ENCODE measurements at regions of chr19 and their contacts with region 1.

Region 1: DNA sequence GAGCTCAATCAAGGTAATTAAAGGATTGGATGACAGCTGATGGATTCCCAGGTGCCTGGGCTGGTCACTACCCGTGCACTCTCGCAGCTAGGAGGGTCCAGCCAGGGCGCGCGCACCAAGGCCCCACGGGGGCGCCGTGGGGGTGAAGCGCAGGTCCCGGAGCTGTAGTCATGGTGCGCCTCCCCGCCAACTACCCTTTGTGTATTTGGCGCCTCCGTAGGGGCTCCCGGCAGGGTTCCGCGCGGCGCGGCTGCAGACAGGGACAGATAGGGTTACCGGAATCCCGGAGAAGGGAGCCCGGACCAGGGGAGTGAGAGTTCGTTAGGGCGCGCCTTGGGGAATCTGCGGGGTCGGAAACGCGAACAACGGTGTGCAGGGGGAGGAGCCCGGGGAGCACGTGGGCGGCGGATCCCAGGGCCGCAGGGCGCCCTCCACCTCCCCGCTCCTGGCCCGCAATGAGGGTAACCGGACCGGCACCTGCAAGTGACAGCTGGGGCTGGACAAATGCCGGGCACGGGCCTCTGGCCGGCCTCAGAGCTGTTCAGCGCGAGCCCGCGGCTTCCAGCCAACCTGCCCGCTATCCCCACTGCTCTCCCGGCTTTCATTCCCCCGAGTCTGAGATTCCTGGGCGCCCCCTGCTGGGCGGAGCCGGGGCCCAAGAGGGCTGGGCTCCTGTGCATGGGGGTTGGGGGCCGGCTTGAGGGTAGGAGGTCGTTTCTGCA is 3.4 kb upstream of the PRAM1 start:
- DNase-seq: peak; percentile 71 to 86 (median 78)
- H3K4me3 ChIP-seq: peak overlapping the region; percentile 50 to 94 (median 71)
- H3K27ac ChIP-seq: peak overlapping the region in 58 of 59 donors; percentile 9 to 87 (median 73)
- H3K27me3 ChIP-seq: no peaks in the 10 kb centered on the region
- CTCF ChIP-seq: peak; percentile 72 to 97 (median 91)

Region 2: DNA sequence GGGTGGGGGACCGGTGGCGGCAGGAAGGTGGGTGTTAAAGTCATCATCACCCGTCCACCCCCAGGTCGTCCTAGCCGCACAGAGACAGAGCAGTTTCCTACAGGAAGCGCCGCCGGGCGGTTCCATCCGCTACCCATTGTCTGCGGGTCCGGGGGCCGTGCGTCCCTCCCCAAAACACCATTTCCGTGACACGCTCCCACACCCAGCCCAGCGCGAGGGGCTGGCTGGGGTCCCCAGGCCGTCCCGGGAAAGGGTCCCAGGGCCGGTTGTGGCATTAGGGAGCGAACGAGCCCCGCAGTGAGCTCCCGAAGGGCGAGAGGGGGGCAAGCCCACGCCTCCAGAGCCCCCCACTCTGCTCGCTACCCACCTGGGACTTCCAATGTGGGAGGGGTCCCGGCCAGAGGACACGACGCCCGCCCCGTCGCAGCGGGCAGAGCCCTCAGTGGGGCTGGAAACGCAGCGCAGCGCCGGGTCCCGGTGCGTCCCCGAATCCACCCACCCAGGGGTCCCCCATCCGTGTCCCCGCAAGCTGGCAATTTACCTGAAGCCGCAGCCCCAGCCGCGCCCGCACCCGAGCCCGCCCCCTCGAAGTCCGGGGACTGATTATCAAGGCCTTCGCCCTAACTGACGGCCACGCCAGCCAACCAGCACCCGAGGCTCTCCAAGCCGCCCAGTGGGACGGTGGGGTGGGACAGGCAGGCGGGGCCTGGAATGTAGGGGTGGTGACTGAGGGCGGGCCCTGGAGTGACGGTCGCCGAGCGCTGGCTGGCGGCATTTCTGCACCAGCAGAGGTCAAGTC is 163.0 kb before region 1 on chr19 and contains the start of gene KANK3:
- intact Hi-C with region 1: loop called in 1 of 2 experiments (anchors 2 kb)
- DNase-seq: peak; percentile 28 to 94 (median 90)
- H3K4me3 ChIP-seq: peak within 1 kb of the TSS; percentile 29 to 75 (median 61)
- H3K27ac ChIP-seq: peak within 1 kb of the TSS in 51 of 59 donors; percentile 7 to 91 (median 77)
- H3K27me3 ChIP-seq: peaks cover 0 to 31% (median 9%) of the 10 kb centered on the region in 45 donors
- CTCF ChIP-seq: peak in 16 of 56 donors; percentile 7 to 42 (median 21)
- total RNA-seq, gene KANK3: 4.7 to 29.3 (median 10.7) TPM

Region 3: DNA sequence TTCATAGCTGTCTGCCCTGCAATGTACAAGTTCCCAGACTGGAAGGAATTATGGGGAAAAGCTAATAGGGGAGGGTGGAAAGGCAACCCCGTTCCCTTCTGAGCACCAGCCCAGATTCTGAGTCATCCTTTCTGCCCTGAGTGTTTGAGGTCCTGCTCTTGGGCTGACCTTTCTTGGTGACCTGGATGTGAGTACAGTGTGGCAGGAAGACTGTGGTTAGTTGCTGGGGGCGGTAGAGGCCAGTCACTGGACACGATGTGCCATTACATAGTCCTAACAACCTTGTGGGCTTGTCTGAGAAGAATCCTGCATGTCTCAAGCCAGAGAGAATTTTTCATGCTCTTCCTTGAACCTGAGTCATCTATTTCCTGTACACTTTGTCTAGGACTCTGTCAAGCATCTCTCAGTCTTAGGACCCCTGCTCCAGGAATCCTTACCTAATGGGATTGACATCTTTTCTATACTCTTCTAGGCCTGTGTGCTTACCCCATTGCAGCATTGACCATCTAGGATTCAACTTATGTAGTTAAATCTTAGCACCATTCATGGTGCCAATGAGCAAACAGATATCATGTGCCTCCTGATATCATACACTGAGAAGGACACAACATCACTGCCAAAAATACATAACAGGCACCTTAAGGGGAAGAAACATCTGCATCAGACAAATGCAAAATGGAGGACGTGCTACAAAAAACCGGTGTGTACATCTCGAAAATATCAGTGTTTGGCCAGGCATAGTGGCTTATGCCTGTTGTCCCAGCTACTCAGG is 150.0 kb before region 1 on chr19:
- intact Hi-C with region 1: loop called (anchors 1 to 2 kb)
- DNase-seq: no peak
- H3K4me3 ChIP-seq: no peak overlapping the region
- H3K27ac ChIP-seq: peak overlapping the region in 1 of 59 donors; percentile 10
- H3K27me3 ChIP-seq: peaks cover 0 to 6% (median 0%) of the 10 kb centered on the region in 45 donors
- CTCF ChIP-seq: no peak

Region 4: DNA sequence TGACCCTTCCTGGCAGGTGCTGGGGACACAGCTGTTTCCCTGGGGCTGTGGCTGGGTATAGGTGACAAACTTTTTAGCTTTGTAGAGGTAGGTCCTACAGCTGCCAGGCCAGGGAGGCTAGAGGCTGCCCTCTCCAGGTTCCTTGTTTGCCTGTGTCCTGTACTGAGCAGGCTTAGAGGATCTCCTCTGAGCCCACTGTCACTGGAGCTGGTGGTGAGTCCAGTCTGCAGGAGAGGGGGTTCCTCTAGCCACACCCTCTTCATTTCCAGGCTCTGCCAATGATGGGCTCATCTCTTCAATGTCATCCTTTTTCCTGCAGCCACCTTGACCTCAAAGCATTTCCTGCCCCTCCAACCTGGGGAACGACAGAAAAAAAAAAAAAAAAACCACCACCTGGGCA is 128.2 kb before region 1 on chr19:
- intact Hi-C with region 1: no loop called
- DNase-seq: peak in 1 of 10 donors; percentile 12
- H3K4me3 ChIP-seq: no peak overlapping the region
- H3K27ac ChIP-seq: no peak overlapping the region
- H3K27me3 ChIP-seq: no peaks in the 10 kb centered on the region
- CTCF ChIP-seq: no peak

Region 5: GRCh38 chr19:8396563-8397203 is 109.2 kb before region 1 on chr19:
- intact Hi-C with region 1: loop called in 1 of 2 experiments (anchors 5 kb)
- DNase-seq: peak in 9 of 10 donors; percentile 34 to 82 (median 71)
- H3K4me3 ChIP-seq: peak overlapping the region in 1 of 59 donors; percentile 6
- H3K27ac ChIP-seq: peak overlapping the region in 58 of 59 donors; percentile 39 to 100 (median 99)
- H3K27me3 ChIP-seq: no peaks in the 10 kb centered on the region
- CTCF ChIP-seq: peak; percentile 33 to 87 (median 71)

Region 6: GRCh38 chr19:8412783-8413628 is 92.8 kb before region 1 on chr19 and contains the start of gene MARCHF2:
- intact Hi-C with region 1: loop called in 1 of 2 experiments (anchors 1 kb)
- DNase-seq: peak; percentile 91 to 99 (median 96)
- H3K4me3 ChIP-seq: peak within 1 kb of the TSS; percentile 61 to 100 (median 90)
- H3K27ac ChIP-seq: peak within 1 kb of the TSS in 37 of 59 donors; percentile 7 to 80 (median 62)
- H3K27me3 ChIP-seq: no peaks in the 10 kb centered on the region
- CTCF ChIP-seq: peak; percentile 35 to 86 (median 72)
- total RNA-seq, gene MARCHF2: 61.3 to 163 (median 86.8) TPM

Region 7: DNA sequence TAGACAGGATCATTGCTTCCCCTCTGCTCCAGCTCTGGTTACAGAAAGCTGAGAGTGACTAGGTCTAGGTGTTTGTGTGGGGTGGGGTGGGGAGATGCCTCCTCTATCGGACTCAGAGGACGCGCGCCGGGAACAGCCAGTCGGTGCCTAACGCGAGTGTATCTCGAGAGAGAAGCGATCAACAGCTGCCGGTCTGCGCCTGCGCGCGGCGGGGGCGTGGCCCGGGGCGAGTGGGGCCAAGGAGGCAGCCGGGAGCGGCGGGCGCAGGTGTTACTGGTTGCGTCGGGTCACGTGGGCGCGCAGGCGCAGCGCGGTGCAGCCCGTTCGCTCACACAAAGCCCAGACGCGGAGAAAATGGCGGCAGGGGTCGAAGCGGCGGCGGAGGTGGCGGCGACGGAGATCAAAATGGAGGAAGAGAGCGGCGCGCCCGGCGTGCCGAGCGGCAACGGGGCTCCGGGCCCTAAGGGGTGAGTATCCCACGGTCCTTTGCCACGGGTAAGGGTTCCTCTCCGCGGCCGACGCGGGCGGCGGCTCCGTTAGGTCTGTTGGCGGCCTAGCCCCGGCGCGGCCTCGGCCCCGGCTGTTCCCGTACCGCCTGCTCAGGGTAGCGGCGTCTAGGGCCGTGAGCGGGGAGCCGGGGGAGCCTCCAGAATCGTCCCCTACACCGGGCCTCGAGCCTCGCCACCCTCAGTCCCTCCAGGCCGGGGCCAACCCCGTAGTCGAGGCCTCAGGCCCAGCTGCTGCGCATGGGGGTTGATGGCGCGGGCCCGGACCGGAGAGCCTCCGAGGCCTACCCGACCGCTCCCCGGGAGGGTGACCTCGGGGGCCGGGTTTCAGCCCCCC is 61.0 kb before region 1 on chr19 and contains the start of gene HNRNPM:
- intact Hi-C with region 1: loop called (anchors 2 to 5 kb)
- DNase-seq: peak; percentile 99 to 100 (median 100)
- H3K4me3 ChIP-seq: peak within 1 kb of the TSS; percentile 47 to 100 (median 98)
- H3K27ac ChIP-seq: peak within 1 kb of the TSS; percentile 80 to 99 (median 95)
- H3K27me3 ChIP-seq: no peaks in the 10 kb centered on the region
- CTCF ChIP-seq: peak in 28 of 56 donors; percentile 6 to 55 (median 26)
- total RNA-seq, gene HNRNPM: 99.2 to 179 (median 128) TPM

Region 8: DNA sequence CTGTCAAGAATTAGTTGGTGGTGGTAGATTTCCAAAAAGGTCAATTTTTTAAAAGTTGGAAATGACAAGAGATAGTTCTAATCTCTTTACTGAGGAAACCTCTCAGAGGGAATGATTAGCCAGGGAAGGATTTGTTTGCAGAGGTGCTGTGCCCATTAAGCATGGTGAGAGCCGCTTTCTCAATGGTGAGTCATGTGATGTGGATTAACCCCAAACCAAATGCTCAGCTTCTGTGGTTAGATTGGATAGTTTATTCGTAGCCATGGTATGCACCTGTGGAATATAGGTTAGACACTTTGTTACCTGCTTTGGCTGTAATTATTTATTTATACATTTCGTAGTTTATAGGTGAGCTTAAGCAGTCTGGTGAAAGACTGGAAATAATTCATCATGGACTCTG is 54.0 kb before region 1 on chr19:
- intact Hi-C with region 1: loop called in 1 of 2 experiments (anchors 5 kb)
- DNase-seq: no peak
- H3K4me3 ChIP-seq: no peak overlapping the region
- H3K27ac ChIP-seq: no peak overlapping the region
- H3K27me3 ChIP-seq: no peaks in the 10 kb centered on the region
- CTCF ChIP-seq: no peak

Region 9: GRCh38 chr19:8468761-8469373 is 37.0 kb before region 1 on chr19:
- intact Hi-C with region 1: no loop called
- DNase-seq: no peak
- H3K4me3 ChIP-seq: no peak overlapping the region
- H3K27ac ChIP-seq: peak overlapping the region in 2 of 59 donors; percentile 6 to 18
- H3K27me3 ChIP-seq: no peaks in the 10 kb centered on the region
- CTCF ChIP-seq: no peak